Cardiac septum (tissue), 1 donor: ENCODE measurements at regions of chr15 and their contacts with region 1.

Region 1: DNA sequence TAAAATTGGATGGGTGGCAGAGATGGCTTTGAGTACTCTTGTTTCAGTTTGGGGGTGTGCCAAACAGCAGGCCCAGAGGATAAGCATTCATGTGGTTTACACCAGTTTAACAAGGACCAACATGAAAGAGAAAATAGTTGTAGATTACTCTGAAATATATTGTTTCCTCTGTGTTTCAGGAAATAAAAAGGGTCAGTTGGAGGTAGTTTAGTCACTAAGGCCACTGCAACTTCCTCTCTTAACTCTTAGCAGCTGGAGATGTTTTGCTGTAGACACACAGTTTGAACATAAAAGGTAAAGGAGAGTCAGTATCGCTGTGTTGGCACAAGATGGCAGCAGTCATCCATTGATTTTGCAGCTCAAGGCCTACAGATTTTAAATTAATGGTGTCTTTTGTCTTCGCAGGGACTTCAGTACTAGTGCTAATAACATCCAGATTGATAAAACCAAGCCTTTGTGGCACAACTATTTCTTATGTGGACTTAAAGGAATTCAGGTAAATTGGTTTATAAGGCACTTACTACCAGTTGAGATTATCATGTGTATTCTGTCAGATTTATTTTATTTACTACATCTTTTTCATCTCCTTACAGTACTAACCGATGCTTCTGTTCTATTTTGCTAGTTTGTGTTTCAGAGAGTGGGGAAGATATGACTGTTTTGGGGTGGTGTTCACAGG is 65.5 kb downstream of the GALK2 start:
- DNase-seq: no peak

Region 2: DNA sequence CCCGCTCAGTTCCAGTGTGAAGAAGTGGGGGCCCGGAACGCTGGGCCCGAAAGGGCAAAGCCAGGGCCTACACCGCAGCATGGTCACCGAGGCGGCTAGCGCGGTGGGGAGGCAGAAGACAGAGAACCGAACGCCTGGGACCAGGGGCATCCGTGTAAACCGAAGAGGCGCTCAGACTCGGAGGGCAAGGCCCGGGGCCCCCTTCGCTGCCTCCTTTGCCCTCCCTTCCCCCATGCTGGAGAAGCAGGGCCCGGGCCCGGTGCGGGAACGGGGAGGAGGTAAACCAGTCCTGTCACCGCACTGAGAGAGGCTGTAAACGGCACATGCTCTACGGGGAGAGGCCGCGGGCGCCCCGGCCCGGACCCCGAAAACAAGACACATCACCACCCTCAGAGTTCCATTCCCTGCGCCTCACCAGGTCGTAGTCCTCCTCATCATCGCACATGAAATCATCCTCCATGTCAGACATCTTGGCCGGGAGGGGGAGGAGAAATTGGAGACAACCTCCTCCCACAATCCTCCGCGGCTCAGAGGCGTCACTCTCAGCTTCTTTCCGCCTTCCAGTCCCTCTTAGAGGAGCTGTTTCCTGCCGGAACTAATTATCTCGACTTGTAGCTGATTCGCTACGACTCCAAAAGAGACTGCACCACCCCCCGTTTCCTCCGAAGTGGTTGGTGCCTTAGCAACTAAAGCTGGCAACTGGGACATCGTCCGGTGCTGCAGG is 80.3 kb before region 1 on chr15 and contains the start of gene COPS2:
- intact Hi-C with region 1: no loop called
- DNase-seq: peak; percentile 97
- total RNA-seq, gene COPS2: 71.6 TPM

Region 3: DNA sequence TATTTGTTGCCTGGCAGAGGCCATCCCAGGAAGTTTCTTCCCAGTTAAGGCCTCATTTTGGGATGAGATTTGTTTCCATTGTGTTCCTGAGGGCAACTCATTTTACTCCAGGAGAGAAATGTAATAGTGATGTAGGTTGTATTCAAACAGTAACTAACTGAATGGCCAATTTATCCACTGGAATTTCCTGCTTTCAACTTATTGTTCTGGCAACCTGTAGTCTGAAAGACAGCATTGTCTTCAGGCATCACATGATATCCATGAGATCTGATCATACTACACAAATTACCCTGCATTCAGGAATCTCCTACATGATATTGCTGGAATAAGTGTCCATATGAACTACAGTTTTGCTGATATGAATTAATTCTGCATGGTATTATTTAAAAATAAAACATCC is 108.0 kb after region 1 on chr15:
- intact Hi-C with region 1: no loop called
- DNase-seq: no peak

Region 4: DNA sequence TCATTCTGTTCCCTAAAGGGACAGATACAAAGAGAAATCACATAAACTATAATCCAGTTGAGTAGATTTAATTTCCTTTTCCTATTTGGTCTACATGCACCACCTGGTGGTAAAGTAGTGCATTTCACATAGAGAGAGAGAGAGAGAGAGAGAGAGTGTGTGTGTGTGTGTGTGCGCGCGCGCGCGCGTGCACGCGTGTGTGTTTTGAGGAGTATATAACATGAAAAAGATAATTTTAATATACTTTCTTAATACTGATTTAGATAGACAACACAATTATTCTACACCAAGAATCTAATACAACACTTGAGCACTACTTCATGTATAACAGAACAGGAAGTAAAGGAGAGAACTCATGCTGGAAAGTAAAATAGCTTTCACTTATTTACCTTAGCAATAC is 186.4 kb after region 1 on chr15:
- intact Hi-C with region 1: loop called (anchors 2 kb)
- DNase-seq: no peak

Region 5: DNA sequence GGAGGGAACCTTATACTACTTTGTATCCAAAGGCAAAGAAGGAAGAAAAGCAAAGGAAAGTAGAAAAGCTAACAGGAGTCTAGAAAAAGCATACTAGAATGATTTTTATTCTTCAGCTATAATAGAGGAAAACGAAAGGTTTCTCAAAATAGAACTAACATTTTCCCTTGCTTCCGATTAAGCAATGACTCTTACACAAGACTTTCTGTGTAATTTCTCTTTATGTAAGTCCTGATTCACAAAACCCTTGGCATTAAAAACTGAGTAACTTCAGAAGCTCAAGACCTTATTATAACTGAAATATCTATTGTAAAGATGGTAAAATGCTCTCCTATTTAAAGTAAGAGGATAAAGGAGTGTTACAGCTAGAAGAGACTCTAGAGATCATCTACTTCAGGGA is 482.6 kb after region 1 on chr15:
- intact Hi-C with region 1: no loop called
- DNase-seq: no peak

Region 6: GRCh38 chr15:50003786-50004334 is 768.3 kb after region 1 on chr15:
- intact Hi-C with region 1: loop called (anchors 5 kb)
- DNase-seq: peak; percentile 92